Right ventricle myocardium inferior (tissue), 1 donor: ENCODE measurements at regions of chr16 and their contacts with region 1.

Region 1: GRCh38 chr16:12062343-12063005 is 85.9 kb downstream of the SNX29 start:
- DNase-seq: peak; percentile 87
- ATAC-seq: peak; percentile 95

Region 2: DNA sequence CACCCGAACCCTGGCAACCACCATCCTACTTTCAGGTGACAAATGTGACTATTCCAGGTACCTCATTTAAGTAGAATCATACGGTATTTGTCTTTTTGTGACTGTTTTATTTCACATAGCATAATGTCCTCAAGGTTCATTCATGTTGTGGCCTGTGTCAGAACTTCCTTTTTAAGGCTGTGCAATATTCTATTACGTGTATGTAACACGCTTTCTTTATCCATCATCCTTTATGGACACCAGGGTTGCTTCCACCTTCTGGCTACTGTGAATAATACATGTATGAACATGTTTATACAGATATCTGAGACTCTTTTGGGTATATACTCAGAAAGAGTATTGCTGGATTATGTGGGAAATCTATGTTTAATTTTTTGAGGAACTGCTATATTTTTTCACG is 182.5 kb before region 1 on chr16:
- intact Hi-C with region 1: no loop called
- DNase-seq: no peak
- ATAC-seq: no peak

Region 3: GRCh38 chr16:11972128-11972527 is 90.3 kb before region 1 on chr16:
- intact Hi-C with region 1: loop called (anchors 1 kb)
- DNase-seq: no peak
- ATAC-seq: no peak